Tibial artery (tissue), 4 donors: ENCODE measurements at regions of chr1 and their contacts with region 1.

Region 1: DNA sequence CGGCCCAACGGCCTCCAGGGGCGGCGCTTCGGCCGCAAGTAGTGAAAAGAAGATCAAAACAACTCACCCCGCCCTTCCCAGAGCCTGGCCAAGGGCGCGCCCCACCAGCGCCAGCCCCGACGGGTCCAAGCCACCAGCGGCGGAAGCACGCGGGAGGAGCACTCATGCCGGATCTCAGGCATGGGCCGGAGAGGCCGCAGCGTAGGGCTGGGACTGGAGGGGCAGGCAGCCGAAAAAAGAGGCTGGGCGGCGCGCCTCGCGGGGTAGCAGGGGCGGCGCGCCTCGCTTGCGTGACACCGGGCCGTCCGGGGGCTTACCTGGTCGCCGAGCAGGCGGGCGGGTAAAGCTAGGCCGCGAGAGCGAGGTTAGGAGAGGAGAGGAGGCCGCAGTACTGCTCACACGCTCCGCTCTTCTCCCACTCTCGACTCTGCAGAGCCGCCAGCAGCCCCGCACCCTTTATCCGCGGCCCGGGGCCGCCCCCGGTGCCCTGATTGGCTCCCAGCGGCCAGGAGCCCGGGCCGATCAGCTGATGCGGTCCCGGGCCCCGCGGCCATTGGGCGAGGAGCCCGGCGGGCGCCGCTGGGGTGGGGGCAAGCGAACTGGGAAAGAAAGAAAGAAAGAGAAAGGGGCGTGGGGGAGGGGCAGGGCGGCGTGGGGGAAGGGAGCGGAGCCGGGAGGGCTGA is at the start of gene GLUL:
- DNase-seq: peak; percentile 96 to 98
- H3K4me3 ChIP-seq: peak within 1 kb of the TSS; percentile 80 to 85
- H3K27ac ChIP-seq: peak within 1 kb of the TSS; percentile 96 to 97
- H3K4me1 ChIP-seq: peaks cover 0 to 41% (median 20%) of the 10 kb centered on the region in 4 donors
- H3K27me3 ChIP-seq: no peaks in the 10 kb centered on the region
- CTCF ChIP-seq: no peak

Region 2: GRCh38 chr1:182029379-182030331 is 361.8 kb before region 1 on chr1:
- intact Hi-C with region 1: loop called (anchors 10 kb)
- DNase-seq: peak; percentile 96 to 98
- H3K4me3 ChIP-seq: peak overlapping the region; percentile 59 to 68
- H3K27ac ChIP-seq: peak overlapping the region; percentile 81 to 84
- H3K4me1 ChIP-seq: peaks cover 0 to 14% (median 7%) of the 10 kb centered on the region in 4 donors
- H3K27me3 ChIP-seq: no peaks in the 10 kb centered on the region
- CTCF ChIP-seq: peak; percentile 43 to 54

Region 3: GRCh38 chr1:182143154-182143657 is 248.3 kb before region 1 on chr1:
- intact Hi-C with region 1: loop called (anchors 2 kb)
- DNase-seq: peak; percentile 95 to 96
- H3K4me3 ChIP-seq: no peak overlapping the region
- H3K27ac ChIP-seq: peak overlapping the region; percentile 88
- H3K4me1 ChIP-seq: peaks cover 7 to 34% (median 24%) of the 10 kb centered on the region in 4 donors
- H3K27me3 ChIP-seq: no peaks in the 10 kb centered on the region
- CTCF ChIP-seq: peak; percentile 94 to 97

Region 4: DNA sequence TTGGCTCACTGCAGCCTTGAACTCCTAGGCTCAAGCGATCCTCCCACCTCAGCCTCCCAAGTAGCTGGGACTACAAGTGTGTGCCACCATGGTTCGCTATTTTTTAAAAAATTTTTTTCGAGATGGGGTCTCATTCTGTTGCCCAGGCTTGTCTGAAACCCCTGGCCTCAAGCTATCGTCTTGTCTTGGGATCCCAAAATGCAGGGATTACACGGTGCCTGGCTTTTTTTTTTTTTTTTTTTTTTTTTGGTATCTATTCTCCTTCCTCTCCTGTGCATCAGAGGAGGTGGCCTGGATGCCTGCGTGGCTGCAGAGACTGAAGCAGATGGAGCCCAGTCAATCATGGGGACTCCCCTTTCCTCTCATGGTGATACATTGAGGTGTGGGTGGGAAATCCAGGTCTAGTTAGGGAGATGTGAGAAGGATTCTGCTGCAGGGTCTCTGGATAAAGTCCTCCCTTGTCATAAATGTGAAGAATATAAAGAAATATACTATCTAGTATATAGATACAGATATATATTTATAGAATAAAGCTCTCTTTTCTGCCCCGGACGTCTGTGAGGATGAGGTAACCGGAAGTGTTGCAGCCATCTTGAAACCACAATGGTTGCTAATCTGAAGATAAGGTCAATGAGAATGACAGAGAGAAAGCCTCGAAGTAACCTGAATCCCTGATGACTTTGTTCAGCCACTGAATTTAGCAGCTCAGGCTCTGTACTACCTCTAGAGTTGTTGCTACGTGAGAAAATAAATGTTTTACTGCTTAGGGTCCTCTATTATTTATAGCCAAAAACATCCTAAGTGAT is 39.0 kb after region 1 on chr1:
- intact Hi-C with region 1: no loop called
- DNase-seq: no peak
- H3K4me3 ChIP-seq: no peak overlapping the region
- H3K27ac ChIP-seq: no peak overlapping the region
- H3K4me1 ChIP-seq: no peaks in the 10 kb centered on the region
- H3K27me3 ChIP-seq: no peaks in the 10 kb centered on the region
- CTCF ChIP-seq: no peak

Region 5: GRCh38 chr1:182604169-182605164 is 213.0 kb after region 1 on chr1 and contains the start of gene RGS16:
- intact Hi-C with region 1: loop called (anchors 5 kb)
- DNase-seq: peak; percentile 95 to 97
- H3K4me3 ChIP-seq: peak within 1 kb of the TSS; percentile 48 to 57
- H3K27ac ChIP-seq: peak within 1 kb of the TSS; percentile 48 to 58
- H3K4me1 ChIP-seq: peaks cover 0 to 38% (median 22%) of the 10 kb centered on the region in 4 donors
- H3K27me3 ChIP-seq: no peaks in the 10 kb centered on the region
- CTCF ChIP-seq: no peak